ENCODE measurements at regions of chr7 and their contacts with region 1.

Region 1: GRCh38 chr7:87220026-87220733 is 648 bp upstream of the TMEM243 start:
- DNase-seq: peak; percentile 84
- CTCF ChIP-seq: no peak

Region 2: GRCh38 chr7:87110778-87111177 is 109.4 kb before region 1 on chr7:
- CTCF ChIA-PET with region 1: no interaction called
- POLR2A ChIA-PET with region 1: no interaction called
- DNase-seq: no peak
- CTCF ChIP-seq: no peak

Region 3: GRCh38 chr7:87231256-87231655 is 11.1 kb after region 1 on chr7:
- CTCF ChIA-PET with region 1: interaction called, 15 read pairs
- POLR2A ChIA-PET with region 1: interaction called, 3 read pairs
- DNase-seq: no peak
- CTCF ChIP-seq: no peak

Region 4: DNA sequence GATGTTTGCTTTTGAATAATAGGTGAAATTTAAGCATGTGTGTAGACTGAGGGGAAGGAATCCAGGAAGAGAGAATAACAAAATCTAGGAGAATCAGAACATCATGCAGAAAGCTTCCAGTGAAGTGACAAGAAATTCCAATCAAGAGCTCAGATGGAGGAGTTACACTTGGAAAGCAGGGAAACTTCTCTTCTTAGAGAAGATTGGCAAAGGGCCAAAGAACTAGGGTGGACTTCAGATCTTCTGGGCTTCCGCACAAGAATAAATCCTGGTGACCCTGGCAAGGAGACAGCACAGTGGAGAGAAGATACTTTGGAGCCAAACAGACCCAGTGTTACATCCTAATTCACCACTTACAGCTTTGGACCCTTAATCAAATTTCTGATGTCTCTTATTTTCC is 32.0 kb after region 1 on chr7:
- CTCF ChIA-PET with region 1: no interaction called
- POLR2A ChIA-PET with region 1: no interaction called
- DNase-seq: no peak
- CTCF ChIP-seq: no peak

Region 5: GRCh38 chr7:87267239-87267900 is 47.2 kb after region 1 on chr7:
- CTCF ChIA-PET with region 1: no interaction called
- POLR2A ChIA-PET with region 1: no interaction called
- DNase-seq: no peak
- CTCF ChIP-seq: no peak

Measured in GM10248 (cell line).